ENCODE measurements at regions of chr2 and their contacts with region 1.

Region 1: DNA sequence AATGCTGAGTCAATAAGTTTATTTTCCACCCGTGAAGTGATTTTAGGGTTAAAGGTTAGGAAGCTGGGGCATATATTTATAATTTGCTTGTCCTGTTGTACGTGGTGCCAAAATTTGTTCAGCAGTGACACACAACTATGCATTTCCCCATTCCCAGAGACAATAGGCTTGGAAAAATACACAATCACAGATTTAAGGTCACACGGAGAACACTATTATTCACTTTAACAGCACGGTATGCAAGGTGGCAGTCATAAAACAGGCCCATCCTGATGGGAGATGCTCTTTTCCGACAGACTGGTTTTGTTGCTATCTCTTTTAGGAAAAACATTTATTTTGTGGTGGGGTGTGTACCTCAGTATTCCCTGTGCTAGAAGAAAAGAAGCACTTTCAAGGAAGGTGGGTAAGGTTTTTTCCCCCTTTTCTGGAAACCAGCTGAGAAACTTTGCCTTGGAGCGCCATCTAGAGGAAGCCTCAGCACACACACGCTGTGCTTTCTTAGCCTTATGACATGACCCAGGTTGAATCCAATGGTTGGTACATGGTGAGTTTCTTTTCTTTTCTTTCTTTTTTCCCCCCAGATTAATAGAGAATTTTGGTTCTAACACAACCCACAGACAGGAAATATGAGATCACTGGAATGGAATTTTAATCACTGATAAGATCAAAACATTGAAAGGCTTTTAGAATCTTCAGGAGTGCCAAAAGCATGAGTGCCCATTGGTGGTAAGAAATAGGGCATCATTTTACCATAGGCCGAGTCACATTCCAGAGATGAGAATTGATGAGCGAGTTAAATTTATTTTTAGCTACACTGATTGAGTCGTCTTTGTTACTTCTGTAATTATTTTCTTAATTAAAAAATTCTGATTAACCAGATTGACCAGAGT is 332.1 kb downstream of the AGPS start:
- DNase-seq: peak; percentile 50
- ATAC-seq: peak; percentile 91
- H3K4me3 ChIP-seq: no peak overlapping the region
- H3K27ac ChIP-seq: no peak overlapping the region
- H3K4me1 ChIP-seq: no peaks in the 10 kb centered on the region
- H3K27me3 ChIP-seq: peaks cover 3% of the 10 kb centered on the region; the same call in 1 of the 2 replicates
- CTCF ChIP-seq: peak; percentile 92

Region 2: GRCh38 chr2:177332041-177332991 is 392.3 kb before region 1 on chr2:
- CTCF ChIA-PET with region 1: no interaction called
- POLR2A ChIA-PET with region 1: no interaction called
- in situ Hi-C with region 1: no loop called
- intact Hi-C with region 1: loop called (anchors 1 kb)
- DNase-seq: peak; percentile 46
- ATAC-seq: peak; percentile 80
- H3K4me3 ChIP-seq: no peak overlapping the region
- H3K27ac ChIP-seq: peak overlapping the region; percentile 69
- H3K4me1 ChIP-seq: peaks cover 14% of the 10 kb centered on the region
- H3K27me3 ChIP-seq: no peaks in the 10 kb centered on the region
- CTCF ChIP-seq: peak; percentile 77

Region 3: GRCh38 chr2:177419274-177419673 is 305.4 kb before region 1 on chr2:
- CTCF ChIA-PET with region 1: no interaction called
- POLR2A ChIA-PET with region 1: no interaction called
- in situ Hi-C with region 1: no loop called
- intact Hi-C with region 1: loop called (anchors 5 kb)
- DNase-seq: no peak
- ATAC-seq: no peak
- H3K4me3 ChIP-seq: no peak overlapping the region
- H3K27ac ChIP-seq: peak overlapping the region; percentile 78; the same call in 1 of the 2 replicates
- H3K4me1 ChIP-seq: peaks cover 11% of the 10 kb centered on the region; the same call in 1 of the 2 replicates
- H3K27me3 ChIP-seq: no peaks in the 10 kb centered on the region
- CTCF ChIP-seq: no peak

Region 4: GRCh38 chr2:177489719-177490301 is 234.8 kb before region 1 on chr2:
- CTCF ChIA-PET with region 1: no interaction called
- POLR2A ChIA-PET with region 1: no interaction called
- in situ Hi-C with region 1: no loop called
- intact Hi-C with region 1: loop called (anchors 5 kb)
- DNase-seq: no peak
- ATAC-seq: peak; percentile 58; the same call in 1 of the 2 replicates
- H3K4me3 ChIP-seq: no peak overlapping the region
- H3K27ac ChIP-seq: no peak overlapping the region
- H3K4me1 ChIP-seq: no peaks in the 10 kb centered on the region
- H3K27me3 ChIP-seq: no peaks in the 10 kb centered on the region
- CTCF ChIP-seq: peak; percentile 72; the same call in 1 of the 2 replicates

Region 5: GRCh38 chr2:177872286-177872685 is 147.6 kb after region 1 on chr2:
- CTCF ChIA-PET with region 1: no interaction called
- POLR2A ChIA-PET with region 1: no interaction called
- in situ Hi-C with region 1: no loop called
- intact Hi-C with region 1: no loop called
- DNase-seq: no peak
- ATAC-seq: no peak
- H3K4me3 ChIP-seq: no peak overlapping the region
- H3K27ac ChIP-seq: no peak overlapping the region
- H3K4me1 ChIP-seq: no peaks in the 10 kb centered on the region
- H3K27me3 ChIP-seq: no peaks in the 10 kb centered on the region
- CTCF ChIP-seq: no peak

Measured in Panc1 (cell line).